Left cardiac atrium (tissue), 4 donors: ENCODE measurements at regions of chr3 and their contacts with region 1.

Region 1: DNA sequence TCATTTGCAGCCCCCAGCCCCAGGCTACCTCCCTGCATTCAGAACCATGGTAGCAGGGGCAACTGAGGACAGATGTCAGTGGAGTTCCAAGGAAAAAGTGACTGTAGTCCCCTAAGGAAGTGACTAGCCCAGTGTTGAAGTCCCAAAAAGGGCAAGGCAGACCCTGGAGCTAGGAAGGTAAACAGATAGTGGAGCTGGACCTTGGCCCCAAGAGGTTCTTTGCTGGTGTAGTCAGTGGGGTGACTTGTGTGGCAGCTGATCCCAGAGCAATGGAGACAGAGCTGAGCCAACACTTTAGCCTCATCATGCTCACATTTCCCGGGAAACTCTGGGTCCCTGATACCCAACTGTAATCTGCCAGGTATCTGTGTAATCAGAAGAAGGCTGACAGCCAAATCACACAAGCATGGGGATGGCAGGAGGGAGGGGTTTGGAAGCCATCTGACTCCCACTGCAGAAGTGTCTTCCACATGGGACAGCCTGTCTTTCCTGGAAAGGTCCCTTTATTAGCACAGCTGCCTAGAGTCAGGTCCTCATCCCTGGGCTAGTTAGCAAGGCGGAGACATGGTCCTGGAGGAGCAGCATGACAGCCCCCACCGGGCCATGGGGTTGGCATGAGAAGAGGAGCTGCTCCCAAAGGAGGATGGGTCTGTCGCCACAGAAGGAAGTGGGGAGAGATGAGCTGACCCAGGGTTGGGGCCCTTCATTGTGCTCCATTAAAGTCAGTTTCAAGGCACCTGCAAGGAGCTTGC is 39.8 kb downstream of the PXYLP1 start:
- DNase-seq: no peak
- ATAC-seq: no peak

Region 2: DNA sequence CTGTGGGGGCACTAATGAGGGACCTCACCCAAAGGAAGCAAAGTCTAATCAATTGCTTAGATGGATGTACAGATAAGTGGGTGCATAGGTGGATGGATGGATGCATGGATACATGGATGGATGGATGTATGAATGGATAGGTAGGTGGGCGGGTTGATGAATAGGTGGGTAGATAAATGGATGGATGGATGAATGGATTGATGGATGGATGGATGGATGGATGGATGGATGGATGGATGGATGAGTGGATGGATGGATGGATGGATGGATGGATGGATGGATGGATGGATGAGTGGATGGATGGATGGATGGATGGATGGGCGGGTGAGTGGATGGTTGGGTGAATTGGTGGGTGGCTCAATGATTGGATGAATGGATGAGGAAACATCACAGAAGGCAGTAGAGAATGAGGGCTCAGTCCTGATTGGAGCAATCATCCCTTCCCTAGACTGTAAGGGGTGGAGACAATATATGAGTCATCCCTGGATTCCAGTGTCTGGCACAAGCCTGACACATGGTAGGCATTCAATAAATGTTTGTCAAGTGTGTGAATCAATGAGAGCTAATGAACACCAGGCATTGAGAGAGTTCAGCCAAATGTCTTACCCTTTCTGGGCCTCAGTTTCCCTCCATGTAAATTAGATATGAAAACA is 80.2 kb before region 1 on chr3:
- intact Hi-C with region 1: no loop called
- DNase-seq: no peak
- ATAC-seq: no peak

Region 3: GRCh38 chr3:141237701-141238521 is 33.5 kb before region 1 on chr3:
- intact Hi-C with region 1: loop called (anchors 5 kb)
- DNase-seq: peak; percentile 71
- ATAC-seq: peak; percentile 14 to 43